Activated CD4-positive, alpha-beta T cell treated with anti-CD3 and anti-CD28 coated beads, Interleukin-2, amount 10 ng/mL, durations not matched to agents 24 days and 14 days (primary cell): ENCODE measurements at regions of chr19 and their contacts with region 1.

Region 1: GRCh38 chr19:1767464-1767933 is 14.2 kb downstream of the ONECUT3 start:
- DNase-seq: peak; percentile 88
- H3K4me3 Mint-ChIP-seq: no peak overlapping the region
- H3K27ac Mint-ChIP-seq: no peak overlapping the region
- H3K4me1 Mint-ChIP-seq: peaks cover 2% of the 10 kb centered on the region
- H3K27me3 Mint-ChIP-seq: peaks cover 65% of the 10 kb centered on the region

Region 2: DNA sequence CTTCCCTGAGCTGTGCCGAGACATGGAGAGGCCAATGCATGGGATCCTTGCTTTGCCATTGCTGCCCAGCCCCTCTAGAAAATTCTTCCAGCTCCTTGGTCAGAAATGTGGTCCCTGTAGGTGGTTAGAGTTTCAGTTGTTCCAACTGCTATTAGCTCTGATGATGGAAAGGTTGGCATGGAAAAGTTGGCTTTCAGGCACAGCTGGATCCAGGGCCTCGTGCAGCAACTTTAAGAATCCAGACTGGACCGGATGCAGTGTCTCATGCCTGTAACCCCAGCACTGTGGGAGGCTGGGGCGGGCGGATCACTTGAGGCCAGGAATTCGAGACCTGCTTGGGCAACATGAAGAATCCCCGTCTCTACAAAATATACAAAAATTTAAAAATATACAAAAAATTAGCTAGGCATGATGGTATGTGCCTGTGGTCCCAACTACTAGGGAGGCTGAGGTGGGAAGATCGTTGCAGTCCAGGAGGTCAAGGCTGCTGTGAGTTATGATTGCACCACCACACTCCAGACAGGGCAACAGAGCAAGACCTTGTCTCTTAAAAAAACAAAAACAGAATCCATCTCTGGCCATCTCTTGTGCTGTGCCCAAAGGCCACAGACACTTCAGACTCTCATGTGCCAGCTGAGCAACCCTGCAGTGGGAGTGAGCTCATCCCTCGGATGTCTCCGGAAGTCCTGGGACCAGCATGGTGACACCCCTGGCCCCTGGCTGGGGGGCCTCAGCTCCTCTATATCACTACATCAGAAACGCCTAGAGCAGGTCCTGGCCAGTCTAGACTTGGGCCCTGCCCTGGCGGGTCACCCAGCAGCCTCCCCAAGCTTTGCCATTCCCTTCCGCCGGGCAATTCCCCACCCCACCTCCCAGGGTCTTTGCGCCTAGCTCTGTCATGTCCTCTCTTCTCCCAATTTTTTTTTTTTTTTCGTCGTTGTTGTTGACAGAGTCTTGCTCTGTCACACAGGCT is 216.1 kb before region 1 on chr19:
- intact Hi-C with region 1: loop called (anchors 2 kb)
- DNase-seq: no peak
- H3K4me3 Mint-ChIP-seq: no peak overlapping the region
- H3K27ac Mint-ChIP-seq: no peak overlapping the region
- H3K4me1 Mint-ChIP-seq: peaks cover under 1% of the 10 kb centered on the region
- H3K27me3 Mint-ChIP-seq: no peaks in the 10 kb centered on the region

Region 3: GRCh38 chr19:1672038-1672768 is 95.3 kb before region 1 on chr19:
- intact Hi-C with region 1: loop called (anchors 1 kb)
- DNase-seq: peak; percentile 88
- H3K4me3 Mint-ChIP-seq: peak overlapping the region; percentile 59
- H3K27ac Mint-ChIP-seq: no peak overlapping the region
- H3K4me1 Mint-ChIP-seq: peaks cover 9% of the 10 kb centered on the region
- H3K27me3 Mint-ChIP-seq: peaks cover 54% of the 10 kb centered on the region

Region 4: GRCh38 chr19:1749373-1750342 is 17.8 kb before region 1 on chr19:
- intact Hi-C with region 1: loop called (anchors 2 kb)
- DNase-seq: no peak
- H3K4me3 Mint-ChIP-seq: peak overlapping the region; percentile 49
- H3K27ac Mint-ChIP-seq: no peak overlapping the region
- H3K4me1 Mint-ChIP-seq: peaks cover 6% of the 10 kb centered on the region
- H3K27me3 Mint-ChIP-seq: peaks cover 52% of the 10 kb centered on the region

Region 5: GRCh38 chr19:1807722-1808397 is 40.4 kb after region 1 on chr19:
- intact Hi-C with region 1: no loop called
- DNase-seq: no peak
- H3K4me3 Mint-ChIP-seq: no peak overlapping the region
- H3K27ac Mint-ChIP-seq: no peak overlapping the region
- H3K4me1 Mint-ChIP-seq: peaks cover 9% of the 10 kb centered on the region
- H3K27me3 Mint-ChIP-seq: no peaks in the 10 kb centered on the region